AG04450 (cell line): ENCODE measurements at regions of chr17 and their contacts with region 1.

Region 1: GRCh38 chr17:74961657-74962490 is 10.7 kb downstream of the HID1 start:
- DNase-seq: peak; percentile 61
- H3K4me3 ChIP-seq: no peak overlapping the region
- H3K27ac ChIP-seq: no peak overlapping the region
- H3K27me3 ChIP-seq: no peaks in the 10 kb centered on the region
- CTCF ChIP-seq: peak; percentile 70

Region 2: DNA sequence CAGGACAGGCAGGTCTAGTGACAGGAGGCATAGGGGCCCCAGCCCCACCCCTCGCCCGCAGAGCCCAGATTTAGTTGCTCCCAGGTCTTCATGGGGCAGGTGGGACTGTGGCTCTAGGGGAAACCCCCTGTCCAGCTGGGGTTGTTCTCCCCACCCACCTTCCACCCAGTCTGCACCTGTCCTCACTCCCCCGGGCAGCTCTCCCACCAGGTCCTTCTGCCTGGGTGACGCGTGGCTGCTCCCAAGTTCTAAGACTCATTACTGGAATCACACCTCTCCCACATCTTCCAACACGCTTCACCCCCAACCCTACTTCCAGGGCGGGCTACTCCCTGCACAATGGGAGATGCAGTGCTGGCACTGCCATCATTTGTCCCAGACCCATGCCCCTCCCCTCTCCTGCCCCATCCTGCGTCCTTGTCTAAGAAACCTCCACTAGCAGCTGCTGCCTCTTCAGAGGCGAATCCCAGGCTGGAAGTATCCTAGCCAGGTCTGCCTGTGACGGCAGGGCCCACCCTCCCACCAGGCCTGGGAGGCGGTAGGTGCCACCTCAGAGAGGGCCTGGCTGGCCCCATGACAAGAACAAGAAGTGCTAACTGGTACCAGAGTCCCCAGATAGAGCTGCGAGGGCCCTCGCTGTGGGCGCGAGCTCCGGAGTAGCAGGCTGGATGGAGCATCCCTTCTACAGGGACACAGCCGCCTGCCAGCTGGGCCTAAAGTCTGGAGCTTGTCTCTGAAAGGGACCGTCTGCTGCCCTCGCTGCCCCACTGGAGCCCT is 125.0 kb before region 1 on chr17:
- CTCF ChIA-PET with region 1: no interaction called
- POLR2A ChIA-PET with region 1: no interaction called
- DNase-seq: no peak
- H3K4me3 ChIP-seq: no peak overlapping the region
- H3K27ac ChIP-seq: no peak overlapping the region
- H3K27me3 ChIP-seq: no peaks in the 10 kb centered on the region
- CTCF ChIP-seq: no peak

Region 3: DNA sequence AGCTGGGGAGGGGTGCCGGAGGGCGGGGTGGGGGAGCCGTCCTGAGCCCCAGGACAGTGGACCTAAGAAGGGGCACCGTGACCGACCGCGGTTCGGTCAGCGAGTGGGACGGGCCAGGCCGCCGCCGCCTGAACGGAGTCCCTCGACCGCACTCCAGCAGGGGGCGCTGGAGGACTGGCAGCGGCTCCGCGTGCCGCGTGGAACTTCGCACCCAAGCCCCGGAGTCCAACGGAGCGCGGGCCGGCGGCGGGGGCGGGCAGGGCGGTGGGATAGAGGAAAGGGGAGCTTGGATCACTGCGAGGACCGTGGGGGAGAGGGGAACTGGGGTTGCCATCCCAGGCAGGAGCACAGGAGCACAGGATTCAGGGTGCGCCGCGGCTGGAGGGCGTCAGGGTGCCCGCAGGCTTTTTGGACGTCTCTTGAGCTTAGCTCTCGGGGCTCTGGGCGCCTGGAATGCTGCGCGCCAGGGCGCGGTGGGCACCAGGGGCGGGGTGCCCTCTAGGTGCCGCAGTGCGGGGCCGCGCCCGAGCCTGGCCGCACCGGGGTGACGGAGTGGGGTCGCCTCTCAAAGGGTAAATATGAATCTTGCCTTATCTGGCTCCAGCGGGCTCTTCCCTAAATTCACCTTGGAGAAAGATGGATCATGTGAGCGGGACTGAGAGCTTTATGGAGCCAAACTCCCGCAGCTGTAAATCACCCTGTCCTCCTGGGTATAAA is 38.2 kb before region 1 on chr17:
- CTCF ChIA-PET with region 1: interaction called, 40 read pairs
- POLR2A ChIA-PET with region 1: no interaction called
- DNase-seq: no peak
- H3K4me3 ChIP-seq: no peak overlapping the region; the same call in 1 of the 2 replicates
- H3K27ac ChIP-seq: no peak overlapping the region
- H3K27me3 ChIP-seq: peaks cover 67% of the 10 kb centered on the region
- CTCF ChIP-seq: peak; percentile 54

Region 4: GRCh38 chr17:74972107-74972972 is 10.5 kb after region 1 on chr17 and contains the start of gene HID1:
- CTCF ChIA-PET with region 1: interaction called, 62 read pairs
- POLR2A ChIA-PET with region 1: no interaction called
- DNase-seq: no peak
- H3K4me3 ChIP-seq: peak within 1 kb of the TSS; percentile 55
- H3K27ac ChIP-seq: no peak within 1 kb of the TSS
- H3K27me3 ChIP-seq: peaks cover 38% of the 10 kb centered on the region
- CTCF ChIP-seq: no peak
- polyA plus RNA-seq, gene HID1: 1.4 and 1.8 TPM in 2 replicates

Region 5: GRCh38 chr17:75034236-75034908 is 72.5 kb after region 1 on chr17:
- CTCF ChIA-PET with region 1: interaction called, 15 read pairs
- POLR2A ChIA-PET with region 1: interaction called, 6 read pairs
- DNase-seq: peak; percentile 73
- H3K4me3 ChIP-seq: peak overlapping the region; percentile 71
- H3K27ac ChIP-seq: peak overlapping the region; percentile 99
- H3K27me3 ChIP-seq: no peaks in the 10 kb centered on the region
- CTCF ChIP-seq: no peak

Region 6: GRCh38 chr17:75173526-75173925 is 211.7 kb after region 1 on chr17:
- CTCF ChIA-PET with region 1: interaction called, 15 read pairs
- POLR2A ChIA-PET with region 1: no interaction called
- DNase-seq: no peak
- H3K4me3 ChIP-seq: no peak overlapping the region
- H3K27ac ChIP-seq: no peak overlapping the region
- H3K27me3 ChIP-seq: no peaks in the 10 kb centered on the region
- CTCF ChIP-seq: no peak

Region 7: DNA sequence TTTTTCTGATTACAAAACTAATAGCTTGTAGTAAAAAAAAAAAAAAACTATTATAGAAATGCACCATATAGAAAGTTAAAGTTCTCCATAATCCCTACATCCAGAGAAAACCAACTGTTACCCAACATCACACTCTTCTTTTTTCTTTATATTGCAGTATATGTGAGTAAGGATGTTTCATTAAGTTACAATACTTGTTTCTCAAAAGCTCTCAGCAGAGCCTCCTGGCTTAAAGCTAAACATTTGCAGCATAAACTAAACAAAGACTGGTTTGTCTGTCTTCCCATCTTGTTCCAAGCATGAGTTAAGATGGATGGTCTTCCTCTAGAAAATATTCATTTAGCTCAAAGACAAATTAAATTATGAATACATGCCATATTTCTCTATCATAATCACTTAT is 418.4 kb after region 1 on chr17:
- CTCF ChIA-PET with region 1: no interaction called
- POLR2A ChIA-PET with region 1: no interaction called
- DNase-seq: peak; percentile 32
- H3K4me3 ChIP-seq: no peak overlapping the region
- H3K27ac ChIP-seq: no peak overlapping the region
- H3K27me3 ChIP-seq: no peaks in the 10 kb centered on the region
- CTCF ChIP-seq: peak; percentile 26; the same call in 1 of the 2 replicates